ENCODE measurements at regions of chr7 and their contacts with region 1.

Region 1: DNA sequence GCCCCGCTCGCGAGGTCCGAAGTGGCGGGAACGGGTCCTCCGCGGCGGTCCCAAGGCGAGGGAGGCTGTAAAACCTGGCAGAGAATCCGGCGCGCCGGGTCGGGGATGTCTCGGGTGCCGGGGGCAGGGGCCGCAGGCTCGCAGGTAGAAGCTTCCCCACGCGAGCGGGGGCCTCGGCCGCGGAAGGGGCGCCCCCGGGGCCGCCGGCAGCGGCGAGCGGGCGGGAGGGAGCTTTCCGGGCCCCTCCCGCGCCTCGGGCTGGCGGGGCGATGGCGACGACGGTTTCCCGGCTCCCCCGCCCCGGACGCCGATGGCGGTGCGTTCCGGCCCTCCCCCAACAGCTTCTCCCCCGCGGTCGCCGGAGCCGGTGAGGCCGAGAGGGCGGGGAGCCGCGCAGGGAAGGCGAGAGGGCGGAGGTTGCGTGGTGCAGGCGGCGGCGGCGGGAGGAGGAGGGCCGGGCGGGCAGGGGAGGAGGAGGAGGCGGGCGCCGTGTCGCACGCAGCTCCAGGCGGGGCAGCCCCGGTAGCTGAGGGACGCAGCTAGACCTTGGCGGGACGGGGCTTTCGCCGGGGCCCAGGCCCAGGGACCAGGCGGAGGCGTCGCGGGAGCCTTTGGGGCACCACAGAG is at the start of gene CUL1:
- DNase-seq: peak; percentile 87
- H3K4me3 Mint-ChIP-seq: peak within 1 kb of the TSS; percentile 87
- H3K27ac Mint-ChIP-seq: peak within 1 kb of the TSS; percentile 77
- H3K4me1 Mint-ChIP-seq: peaks cover 53% of the 10 kb centered on the region
- H3K27me3 Mint-ChIP-seq: peaks cover 2% of the 10 kb centered on the region
- total RNA-seq, gene CUL1: 46.9 to 48.7 TPM

Region 2: DNA sequence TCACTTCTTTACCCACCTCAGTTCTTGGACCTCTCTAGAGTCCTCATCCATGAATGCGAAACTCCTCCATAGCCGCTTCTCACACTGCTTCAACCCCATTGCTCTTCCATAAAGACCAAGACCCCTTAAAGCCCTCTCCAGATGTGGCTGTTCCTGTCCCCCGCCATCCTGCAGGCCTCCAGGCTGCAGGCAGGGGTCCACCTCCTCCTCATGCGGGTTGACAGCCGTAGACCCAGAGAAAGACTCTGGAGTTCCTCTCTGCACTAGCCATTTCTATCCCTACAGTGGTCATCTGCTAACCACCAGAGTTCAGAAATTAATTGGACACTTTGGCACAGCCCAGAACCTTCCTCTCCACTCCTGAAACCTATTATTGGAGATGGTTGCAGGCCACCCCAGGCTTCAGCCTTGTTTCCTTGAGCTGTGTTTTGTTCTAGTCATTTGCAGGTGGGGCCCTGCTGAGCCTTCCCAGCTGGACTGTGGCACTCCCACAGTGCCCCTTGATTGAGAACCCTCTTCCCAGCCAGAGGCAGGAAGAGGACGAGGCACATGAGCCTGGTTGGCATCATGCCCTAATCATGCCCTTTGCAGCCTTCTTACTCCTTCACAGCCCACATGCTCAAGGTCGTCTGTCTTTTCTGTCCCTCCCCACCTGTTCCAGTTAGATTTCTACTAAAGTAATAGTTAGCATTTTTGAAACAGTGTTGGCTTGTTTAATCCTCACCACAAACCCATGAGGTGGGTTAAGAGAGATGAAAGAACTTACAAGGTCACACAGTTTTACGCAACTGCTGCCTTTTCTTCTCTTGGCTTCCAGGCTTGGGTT is 24.0 kb after region 1 on chr7:
- CTCF ChIA-PET with region 1: no interaction called
- POLR2A ChIA-PET with region 1: interaction called, 16 read pairs
- DNase-seq: no peak
- H3K4me3 Mint-ChIP-seq: no peak overlapping the region
- H3K27ac Mint-ChIP-seq: no peak overlapping the region
- H3K4me1 Mint-ChIP-seq: peaks cover 52% of the 10 kb centered on the region
- H3K27me3 Mint-ChIP-seq: no peaks in the 10 kb centered on the region

Region 3: GRCh38 chr7:148773334-148773733 is 74.8 kb after region 1 on chr7:
- CTCF ChIA-PET with region 1: interaction called, 5 read pairs
- POLR2A ChIA-PET with region 1: interaction called, 46 read pairs
- DNase-seq: peak; percentile 72
- H3K4me3 Mint-ChIP-seq: peak overlapping the region; percentile 21
- H3K27ac Mint-ChIP-seq: peak overlapping the region; percentile 85
- H3K4me1 Mint-ChIP-seq: peaks cover 31% of the 10 kb centered on the region
- H3K27me3 Mint-ChIP-seq: no peaks in the 10 kb centered on the region